Activated CD4-positive, alpha-beta T cell treated with anti-CD3 and anti-CD28 coated beads for 36 hours (primary cell): ENCODE measurements at regions of chr20 and their contacts with region 1.

Region 1: DNA sequence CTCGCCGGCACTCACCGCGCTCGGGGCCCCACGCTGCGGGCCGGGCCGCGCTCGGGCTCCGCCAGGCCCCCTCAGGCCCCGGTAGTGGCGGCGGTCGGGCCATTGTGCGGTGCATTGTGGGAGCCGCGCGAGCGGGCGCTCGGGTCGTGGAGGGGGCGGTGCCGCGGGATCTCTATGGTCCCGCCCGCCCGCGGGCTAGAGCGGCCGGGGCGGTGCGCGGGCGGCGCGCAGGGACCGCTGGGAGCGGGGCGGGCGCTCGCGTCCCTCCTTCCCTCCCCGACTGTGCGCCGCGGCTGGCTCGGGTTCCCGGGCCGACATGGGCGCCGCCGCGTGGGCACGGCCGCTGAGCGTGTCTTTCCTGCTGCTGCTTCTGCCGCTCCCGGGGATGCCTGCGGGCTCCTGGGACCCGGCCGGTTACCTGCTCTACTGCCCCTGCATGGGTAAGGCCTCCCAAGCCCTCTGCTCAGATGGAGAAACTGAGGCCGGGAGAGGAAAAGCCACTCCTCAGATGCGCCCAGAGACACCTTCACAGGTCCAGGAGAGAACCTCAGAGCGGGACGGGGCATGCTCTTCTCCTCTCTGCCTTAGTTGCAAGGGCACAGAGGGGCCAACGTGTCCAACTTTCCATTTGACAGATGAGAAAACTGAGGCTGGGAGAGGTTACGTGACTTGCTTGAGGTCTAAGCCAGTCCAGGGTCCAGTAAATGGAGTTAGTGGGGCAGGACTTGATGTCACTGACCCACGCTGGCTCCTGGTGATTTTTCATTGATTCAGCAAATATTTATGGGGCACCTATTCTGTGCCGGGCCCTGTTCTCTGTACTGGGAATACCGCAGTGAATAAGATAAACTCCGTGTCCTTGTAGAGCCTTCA is at the starts of genes PLAGL2 and POFUT1:
- DNase-seq: peak; percentile 95
- ATAC-seq: peak; percentile 68
- H3K4me3 Mint-ChIP-seq: peak within 1 kb of the TSS; percentile 99
- H3K27ac Mint-ChIP-seq: peak within 1 kb of the TSS; percentile 99
- H3K4me1 Mint-ChIP-seq: peaks cover 63% of the 10 kb centered on the region
- H3K27me3 Mint-ChIP-seq: no peaks in the 10 kb centered on the region
- total RNA-seq, gene PLAGL2: 89.1 to 98.2 TPM
- total RNA-seq, gene POFUT1: 51.8 to 54.3 TPM

Region 2: DNA sequence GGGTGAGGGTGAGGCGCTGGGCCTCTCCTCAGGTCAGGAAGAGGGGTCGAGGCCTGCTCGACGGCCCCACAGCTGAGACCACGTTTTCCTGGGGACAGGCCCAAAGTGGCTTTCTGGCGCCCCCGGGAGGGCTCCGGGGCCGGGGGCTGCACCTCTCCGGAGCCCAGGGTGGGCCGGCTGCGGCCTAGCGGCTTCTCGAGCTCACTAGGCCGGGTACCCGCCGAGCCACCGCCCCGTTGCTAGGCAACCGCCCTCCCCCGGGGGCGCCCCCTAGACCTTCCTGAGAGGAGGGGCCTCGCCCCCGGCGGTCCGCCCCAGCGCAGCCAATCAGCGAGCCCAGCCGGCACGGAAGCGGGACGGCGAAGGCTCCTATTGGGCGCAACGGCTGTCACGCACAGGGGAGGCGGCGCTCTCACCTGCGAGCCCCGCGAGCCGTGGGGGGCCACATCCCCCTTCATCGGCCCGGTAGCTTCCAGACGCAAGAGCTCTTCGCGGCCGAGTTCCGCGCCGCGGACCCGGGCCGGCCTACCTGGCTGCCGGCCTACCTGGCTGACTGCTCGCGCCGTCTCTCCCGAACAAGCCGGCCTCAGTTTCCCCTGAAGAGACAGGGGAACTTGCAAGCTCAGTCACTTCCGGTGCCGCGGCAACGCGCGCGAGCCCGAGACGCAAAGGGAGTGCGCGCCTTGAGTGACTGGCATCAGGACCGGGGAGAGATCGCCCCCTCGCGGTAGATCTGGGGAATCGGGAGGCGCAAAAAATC is 484.4 kb before region 1 on chr20:
- CTCF ChIA-PET with region 1: no interaction called
- POLR2A ChIA-PET with region 1: no interaction called
- intact Hi-C with region 1: loop called in 1 of 2 experiments (anchors 5 kb)
- DNase-seq: peak; percentile 99
- ATAC-seq: peak; percentile 88
- H3K4me3 Mint-ChIP-seq: peak overlapping the region; percentile 97
- H3K27ac Mint-ChIP-seq: peak overlapping the region; percentile 90
- H3K4me1 Mint-ChIP-seq: peaks cover 7% of the 10 kb centered on the region
- H3K27me3 Mint-ChIP-seq: no peaks in the 10 kb centered on the region

Region 3: DNA sequence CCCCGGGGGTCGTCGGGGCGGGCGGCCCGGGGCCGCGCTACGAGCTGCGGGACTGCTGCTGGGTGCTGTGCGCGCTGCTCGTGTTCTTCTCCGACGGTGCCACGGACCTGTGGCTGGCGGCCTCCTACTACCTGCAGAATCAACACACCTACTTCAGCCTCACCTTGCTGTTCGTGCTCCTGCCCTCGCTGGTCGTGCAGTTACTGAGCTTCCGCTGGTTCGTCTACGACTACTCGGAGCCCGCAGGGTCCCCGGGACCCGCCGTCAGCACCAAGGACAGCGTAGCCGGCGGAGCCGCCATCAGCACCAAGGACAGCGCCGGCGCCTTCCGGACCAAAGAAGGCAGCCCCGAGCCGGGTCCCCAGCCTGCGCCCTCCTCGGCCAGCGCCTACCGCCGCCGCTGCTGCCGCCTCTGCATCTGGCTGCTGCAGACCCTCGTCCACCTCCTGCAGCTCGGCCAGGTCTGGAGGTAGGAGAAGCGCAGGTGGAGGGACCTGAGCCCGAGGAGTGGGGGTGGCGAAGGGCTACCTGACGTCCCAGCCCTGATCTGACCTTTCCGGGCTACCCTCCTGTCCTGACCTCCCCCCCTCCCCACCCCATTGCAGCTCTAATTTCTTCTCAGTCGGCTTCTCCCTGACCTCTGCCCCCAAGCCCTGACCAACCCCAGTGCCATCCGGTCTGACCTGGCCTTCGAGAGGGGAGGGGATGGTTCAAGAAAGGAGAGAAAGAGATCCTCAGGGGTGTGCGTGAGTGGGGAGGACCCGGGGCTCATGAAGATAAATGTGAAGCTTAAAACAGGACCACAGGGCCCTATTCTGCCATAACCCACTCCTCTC is 239.4 kb before region 1 on chr20:
- CTCF ChIA-PET with region 1: no interaction called
- POLR2A ChIA-PET with region 1: no interaction called
- intact Hi-C with region 1: no loop called
- DNase-seq: peak; percentile 89
- ATAC-seq: peak; percentile 87
- H3K4me3 Mint-ChIP-seq: peak overlapping the region; percentile 70
- H3K27ac Mint-ChIP-seq: no peak overlapping the region
- H3K4me1 Mint-ChIP-seq: peaks cover 2% of the 10 kb centered on the region
- H3K27me3 Mint-ChIP-seq: peaks cover 53% of the 10 kb centered on the region

Region 4: GRCh38 chr20:32165836-32166485 is 41.9 kb before region 1 on chr20:
- CTCF ChIA-PET with region 1: no interaction called
- POLR2A ChIA-PET with region 1: no interaction called
- intact Hi-C with region 1: no loop called
- DNase-seq: no peak
- ATAC-seq: no peak
- H3K4me3 Mint-ChIP-seq: no peak overlapping the region
- H3K27ac Mint-ChIP-seq: no peak overlapping the region
- H3K4me1 Mint-ChIP-seq: no peaks in the 10 kb centered on the region
- H3K27me3 Mint-ChIP-seq: no peaks in the 10 kb centered on the region

Region 5: GRCh38 chr20:32231847-32232246 is 24.0 kb after region 1 on chr20:
- CTCF ChIA-PET with region 1: no interaction called
- POLR2A ChIA-PET with region 1: interaction called, 5 read pairs
- intact Hi-C with region 1: loop called (anchors 1 kb)
- DNase-seq: peak; percentile 68
- ATAC-seq: peak; percentile 89
- H3K4me3 Mint-ChIP-seq: peak overlapping the region; percentile 52
- H3K27ac Mint-ChIP-seq: peak overlapping the region; percentile 98
- H3K4me1 Mint-ChIP-seq: peaks cover 42% of the 10 kb centered on the region
- H3K27me3 Mint-ChIP-seq: no peaks in the 10 kb centered on the region

Region 6: DNA sequence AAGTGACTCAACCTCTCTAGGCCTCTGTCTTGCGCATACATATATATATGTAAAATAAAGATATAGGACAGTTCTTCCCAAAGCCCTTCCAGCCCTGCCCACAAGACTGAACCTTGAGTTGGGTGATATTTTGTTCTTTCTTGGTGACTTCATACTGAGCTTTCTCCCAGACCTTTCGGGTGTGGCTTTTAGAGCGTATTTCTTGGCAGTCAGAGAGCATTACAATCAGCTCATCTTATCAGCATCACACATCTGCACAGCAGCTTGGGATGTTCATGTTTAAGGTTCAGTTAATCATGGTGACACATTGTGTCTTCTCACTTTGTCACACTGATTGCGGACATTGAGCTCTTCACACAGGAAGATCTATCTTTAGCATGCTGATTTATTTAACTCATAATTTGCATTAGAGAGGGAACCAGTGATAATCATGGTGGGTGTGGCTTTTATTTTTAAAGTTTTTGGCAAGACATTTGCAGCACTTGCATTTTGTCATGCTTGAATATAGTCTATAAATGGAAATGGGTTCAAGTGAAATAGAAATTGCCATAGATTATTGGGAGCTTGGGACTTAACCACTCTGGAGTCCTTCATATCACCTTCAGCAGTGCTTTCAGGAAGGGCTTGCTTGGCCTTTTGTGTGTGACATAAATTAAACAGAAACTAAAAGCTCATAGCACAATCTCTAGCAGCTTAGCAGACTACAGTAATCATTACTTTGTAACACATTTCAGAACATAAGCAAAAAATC is 77.9 kb after region 1 on chr20:
- CTCF ChIA-PET with region 1: interaction called, 5 read pairs
- POLR2A ChIA-PET with region 1: interaction called, 40 read pairs
- intact Hi-C with region 1: loop called (anchors 1 kb)
- DNase-seq: peak; percentile 70
- ATAC-seq: peak; percentile 83
- H3K4me3 Mint-ChIP-seq: peak overlapping the region; percentile 58
- H3K27ac Mint-ChIP-seq: peak overlapping the region; percentile 97
- H3K4me1 Mint-ChIP-seq: peaks cover 88% of the 10 kb centered on the region
- H3K27me3 Mint-ChIP-seq: no peaks in the 10 kb centered on the region

Region 7: GRCh38 chr20:32484958-32485769 is 277.3 kb after region 1 on chr20:
- CTCF ChIA-PET with region 1: no interaction called
- POLR2A ChIA-PET with region 1: no interaction called
- intact Hi-C with region 1: loop called (anchors 1 to 10 kb)
- DNase-seq: peak; percentile 90
- ATAC-seq: peak; percentile 85
- H3K4me3 Mint-ChIP-seq: peak overlapping the region; percentile 80
- H3K27ac Mint-ChIP-seq: peak overlapping the region; percentile 91
- H3K4me1 Mint-ChIP-seq: peaks cover 34% of the 10 kb centered on the region
- H3K27me3 Mint-ChIP-seq: no peaks in the 10 kb centered on the region

Region 8: GRCh38 chr20:32966881-32967781 is 759.3 kb after region 1 on chr20:
- CTCF ChIA-PET with region 1: no interaction called
- POLR2A ChIA-PET with region 1: no interaction called
- intact Hi-C with region 1: loop called in 1 of 2 experiments (anchors 5 kb)
- DNase-seq: peak; percentile 79
- ATAC-seq: peak; percentile 29
- H3K4me3 Mint-ChIP-seq: peak overlapping the region; percentile 53
- H3K27ac Mint-ChIP-seq: no peak overlapping the region
- H3K4me1 Mint-ChIP-seq: peaks cover 14% of the 10 kb centered on the region
- H3K27me3 Mint-ChIP-seq: no peaks in the 10 kb centered on the region